WTC11 (cell line): ENCODE measurements at regions of chrX and their contacts with region 1.

Region 1: DNA sequence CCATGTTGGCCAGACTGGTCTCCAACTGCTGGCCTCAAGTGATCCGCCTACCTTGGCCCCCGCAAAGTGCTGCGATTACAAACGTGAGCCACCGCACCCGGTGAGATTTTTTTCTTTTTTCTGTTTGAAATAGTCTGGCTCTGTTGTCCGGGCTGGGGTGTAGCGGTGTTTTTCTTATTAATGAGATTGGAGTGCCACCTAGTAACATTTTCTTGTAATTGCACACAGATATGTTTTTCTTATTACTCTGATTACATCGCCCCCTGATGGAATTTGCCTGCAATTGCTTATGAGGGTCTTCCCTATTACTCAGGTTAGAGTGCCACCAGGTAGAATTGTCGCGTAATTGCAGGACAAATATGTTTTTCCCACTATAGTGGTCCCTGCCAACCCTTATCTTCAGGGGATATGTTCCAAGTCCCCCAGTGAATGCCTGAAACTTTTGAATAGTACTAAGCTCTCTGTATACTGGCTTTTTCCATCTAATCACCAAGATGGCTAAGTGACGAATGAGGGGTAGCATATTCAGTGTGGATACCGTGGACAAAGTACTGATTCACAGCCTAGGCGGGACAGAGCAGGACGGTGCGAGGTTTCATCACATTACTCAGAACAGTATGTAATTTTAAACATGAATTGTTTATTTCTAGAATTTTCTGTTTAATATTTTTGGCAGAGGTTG is 8.6 kb upstream of the PDHA1 start:
- DNase-seq: peak; percentile 24
- ATAC-seq: peak; percentile 71
- H3K4me3 Mint-ChIP-seq: no peak overlapping the region
- H3K27ac Mint-ChIP-seq: no peak overlapping the region
- H3K4me1 Mint-ChIP-seq: peaks cover 9% of the 10 kb centered on the region
- H3K27me3 Mint-ChIP-seq: no peaks in the 10 kb centered on the region; the same call in 1 of the 2 replicates
- CTCF ChIP-seq: peak; percentile 69

Region 2: GRCh38 chrX:18931972-18932371 is 403.1 kb before region 1 on chrX:
- CTCF ChIA-PET with region 1: interaction called, 13 read pairs
- POLR2A ChIA-PET with region 1: no interaction called
- DNase-seq: peak; percentile 15
- ATAC-seq: peak; percentile 61
- H3K4me3 Mint-ChIP-seq: no peak overlapping the region
- H3K27ac Mint-ChIP-seq: no peak overlapping the region
- H3K4me1 Mint-ChIP-seq: peaks cover under 1% of the 10 kb centered on the region; the same call in 1 of the 2 replicates
- H3K27me3 Mint-ChIP-seq: no peaks in the 10 kb centered on the region
- CTCF ChIP-seq: no peak

Region 3: GRCh38 chrX:19017271-19017670 is 317.8 kb before region 1 on chrX:
- CTCF ChIA-PET with region 1: interaction called, 64 read pairs
- POLR2A ChIA-PET with region 1: no interaction called
- DNase-seq: peak; percentile 20
- ATAC-seq: peak; percentile 62; the same call in 1 of the 2 replicates
- H3K4me3 Mint-ChIP-seq: no peak overlapping the region
- H3K27ac Mint-ChIP-seq: no peak overlapping the region
- H3K4me1 Mint-ChIP-seq: no peaks in the 10 kb centered on the region
- H3K27me3 Mint-ChIP-seq: no peaks in the 10 kb centered on the region
- CTCF ChIP-seq: no peak

Region 4: DNA sequence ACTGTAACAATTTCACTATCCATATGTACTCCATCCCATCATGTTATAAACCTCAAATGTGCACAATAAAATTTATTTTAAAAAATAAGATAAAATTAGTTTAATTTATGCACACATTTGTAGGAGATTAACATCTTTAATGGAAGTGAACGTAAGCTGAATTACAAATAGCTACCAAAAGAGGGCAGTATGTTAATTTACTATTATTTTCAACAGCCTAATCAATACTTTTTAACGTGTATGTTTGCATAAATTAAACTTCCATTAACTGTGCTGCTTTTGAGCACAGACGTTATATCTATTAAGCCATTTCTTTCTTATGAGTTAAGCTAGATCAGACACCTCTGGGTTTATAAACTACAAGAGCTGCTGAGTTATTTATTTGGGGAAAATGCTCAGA is 294.7 kb before region 1 on chrX:
- CTCF ChIA-PET with region 1: interaction called, 26 read pairs
- POLR2A ChIA-PET with region 1: no interaction called
- DNase-seq: no peak
- ATAC-seq: no peak
- H3K4me3 Mint-ChIP-seq: no peak overlapping the region
- H3K27ac Mint-ChIP-seq: no peak overlapping the region
- H3K4me1 Mint-ChIP-seq: no peaks in the 10 kb centered on the region
- H3K27me3 Mint-ChIP-seq: no peaks in the 10 kb centered on the region
- CTCF ChIP-seq: no peak